Left ventricle myocardium inferior (tissue), 1 donor: ENCODE measurements at regions of chr7 and their contacts with region 1.

Region 1: DNA sequence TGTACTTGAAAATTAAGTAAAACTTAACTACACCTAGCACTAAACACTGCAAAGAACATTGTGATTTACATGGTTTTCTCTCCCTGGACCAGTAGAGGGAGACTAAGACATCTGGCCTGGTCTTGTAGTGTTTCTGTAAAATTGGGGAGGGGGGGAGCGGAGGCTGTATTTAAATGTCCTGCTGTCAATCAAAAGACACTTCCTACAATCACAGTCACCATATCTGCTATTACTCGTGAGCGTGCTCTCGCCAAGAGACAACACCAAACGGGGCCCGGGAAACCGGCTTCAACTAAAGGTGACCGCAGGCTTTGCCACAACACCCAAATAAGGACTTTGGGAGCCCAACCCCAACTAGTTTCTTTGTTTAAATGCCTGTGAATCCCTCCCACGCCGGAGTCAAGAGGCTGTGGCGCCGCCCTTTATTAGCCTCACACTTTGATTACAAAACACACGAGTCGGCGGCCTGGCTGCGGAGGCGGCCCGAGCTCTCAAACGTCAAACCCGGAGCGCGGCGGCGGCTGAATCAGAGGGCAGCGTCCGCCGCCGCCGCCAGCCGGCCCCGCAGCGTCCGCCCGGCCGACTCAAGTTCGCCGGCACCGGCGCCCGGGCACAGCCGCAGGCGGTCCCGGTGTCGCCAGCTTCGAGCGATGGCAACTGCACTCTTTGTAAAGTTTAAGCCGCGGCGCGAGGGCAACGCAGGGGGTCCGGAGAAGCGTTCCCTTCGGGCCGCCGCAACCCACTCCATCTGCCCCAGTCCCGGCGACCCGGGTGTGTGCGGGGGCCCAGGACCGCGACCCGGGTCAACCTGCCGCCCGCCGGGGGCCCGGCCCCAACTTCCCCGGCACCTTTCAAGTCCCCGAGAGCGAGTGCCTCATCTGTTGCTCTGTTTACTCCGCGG is 1.3 kb downstream of the KDM7A start:
- DNase-seq: peak; percentile 89
- H3K4me3 ChIP-seq: peak overlapping the region; percentile 97
- H3K27ac ChIP-seq: peak overlapping the region; percentile 100
- H3K4me1 ChIP-seq: peaks cover 58% of the 10 kb centered on the region
- H3K27me3 ChIP-seq: no peaks in the 10 kb centered on the region
- CTCF ChIP-seq: peak; percentile 82

Region 2: GRCh38 chr7:139452958-139453672 is 722.4 kb before region 1 on chr7:
- intact Hi-C with region 1: no loop called
- DNase-seq: no peak
- H3K4me3 ChIP-seq: no peak overlapping the region
- H3K27ac ChIP-seq: no peak overlapping the region
- H3K4me1 ChIP-seq: peaks cover 4% of the 10 kb centered on the region
- H3K27me3 ChIP-seq: peaks cover 11% of the 10 kb centered on the region
- CTCF ChIP-seq: no peak

Region 3: DNA sequence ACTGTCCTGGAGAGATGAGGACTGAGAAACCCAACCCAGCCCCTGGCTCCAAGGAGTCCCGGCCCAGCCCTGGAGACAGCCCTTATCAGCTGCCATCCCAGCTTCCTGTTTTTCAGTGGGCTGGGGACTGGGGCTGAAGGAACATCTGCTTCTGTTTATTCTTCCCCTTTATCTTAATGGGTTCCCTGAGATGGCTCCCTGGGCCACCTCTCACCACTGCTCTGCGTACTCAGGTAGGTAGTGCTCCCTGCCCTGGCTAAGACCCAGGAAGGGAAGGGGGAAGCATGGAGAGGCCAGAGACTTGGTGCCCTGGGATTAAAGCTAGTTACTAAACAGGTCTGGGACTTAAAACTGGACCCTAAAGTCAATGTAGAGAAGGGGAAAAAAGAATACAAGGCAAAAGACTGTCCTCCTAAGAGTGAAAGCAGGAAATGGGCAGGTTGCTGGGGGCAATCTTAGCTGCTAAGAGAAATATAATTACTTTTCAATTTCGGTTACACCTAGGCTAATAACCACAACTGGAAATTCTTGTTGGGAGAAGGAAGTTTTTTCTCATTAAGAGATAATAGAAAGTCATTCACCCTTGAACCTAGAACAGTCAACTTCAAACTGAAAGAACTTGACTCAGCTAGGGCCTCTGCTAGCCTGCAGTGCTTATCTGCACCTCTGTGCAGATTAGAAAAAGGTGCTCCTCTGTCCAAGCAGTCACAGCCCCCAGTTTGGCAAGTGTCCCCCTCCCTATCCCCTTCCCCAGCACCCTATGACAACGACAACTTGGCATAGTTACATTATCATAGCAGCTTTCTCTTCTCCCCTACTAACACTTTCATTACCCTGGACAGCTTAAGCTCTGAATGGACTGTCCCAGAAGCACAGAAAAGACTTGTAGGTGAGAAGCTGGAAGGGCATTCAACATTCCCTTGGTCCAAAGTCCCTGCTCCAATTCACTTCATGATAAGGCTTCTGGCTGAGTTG is 66.9 kb after region 1 on chr7:
- intact Hi-C with region 1: no loop called
- DNase-seq: peak; percentile 18
- H3K4me3 ChIP-seq: no peak overlapping the region
- H3K27ac ChIP-seq: peak overlapping the region; percentile 40
- H3K4me1 ChIP-seq: peaks cover 15% of the 10 kb centered on the region
- H3K27me3 ChIP-seq: peaks cover 6% of the 10 kb centered on the region
- CTCF ChIP-seq: no peak

Region 4: DNA sequence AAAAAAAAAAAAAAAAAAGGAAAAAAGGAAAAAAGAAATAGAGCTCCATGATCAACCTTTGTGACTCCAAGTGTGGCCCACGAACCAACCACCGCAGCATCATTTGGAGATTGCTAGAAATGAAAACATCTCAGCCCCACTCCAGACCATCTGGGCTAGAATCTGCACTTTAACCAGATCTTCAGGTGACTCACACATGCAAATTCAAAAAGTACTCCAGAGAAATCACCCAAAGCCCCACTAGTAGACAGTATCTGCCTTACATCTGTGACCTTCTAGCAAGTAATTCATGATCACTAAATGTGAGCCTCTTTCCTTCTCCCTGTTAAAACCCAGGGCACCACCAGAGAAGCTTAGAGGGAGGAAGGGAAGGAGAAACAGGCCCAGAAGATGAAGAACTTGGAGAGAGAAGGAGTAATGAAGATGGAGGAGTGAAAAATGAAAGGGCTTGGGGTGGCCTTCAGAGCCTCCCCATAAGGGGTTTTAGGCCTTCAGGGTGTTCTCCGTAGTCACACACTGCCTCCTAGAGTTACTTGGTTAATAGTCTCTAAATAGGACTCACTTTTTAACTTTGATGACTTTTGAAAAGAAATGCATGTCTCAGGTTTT is 128.8 kb after region 1 on chr7:
- intact Hi-C with region 1: loop called (anchors 10 kb)
- DNase-seq: no peak
- H3K4me3 ChIP-seq: no peak overlapping the region
- H3K27ac ChIP-seq: no peak overlapping the region
- H3K4me1 ChIP-seq: no peaks in the 10 kb centered on the region
- H3K27me3 ChIP-seq: no peaks in the 10 kb centered on the region
- CTCF ChIP-seq: peak; percentile 58